ENCODE measurements at regions of chr11 and their contacts with region 1.

Region 1: GRCh38 chr11:77994412-77995362 is at the start of gene INTS4:
- DNase-seq: peak; percentile 99 to 100 (median 99)
- ATAC-seq: peak; percentile 98
- H3K4me3 ChIP-seq: peak within 1 kb of the TSS; percentile 23 to 72
- H3K27ac ChIP-seq: peak within 1 kb of the TSS; percentile 71 to 84 (median 77)
- H3K4me1 ChIP-seq: peaks cover 17% of the 10 kb centered on the region
- H3K27me3 ChIP-seq: no peaks in the 10 kb centered on the region
- CTCF ChIP-seq: peak in 1 of 7 experiments; percentile 11
- POLR2A ChIP-seq: peak in 2 of 3 donors; percentile 50 to 56
- total RNA-seq, gene INTS4: 22.7 to 30.9 TPM

Region 2: GRCh38 chr11:78039919-78040671 is 45.4 kb after region 1 on chr11:
- intact Hi-C with region 1: loop called (anchors 5 kb)
- DNase-seq: peak; percentile 63 to 76 (median 70)
- ATAC-seq: peak; percentile 14
- H3K4me3 ChIP-seq: no peak overlapping the region
- H3K27ac ChIP-seq: peak overlapping the region; percentile 32 to 88 (median 75)
- H3K4me1 ChIP-seq: peaks cover 50% of the 10 kb centered on the region
- H3K27me3 ChIP-seq: no peaks in the 10 kb centered on the region
- CTCF ChIP-seq: no peak
- POLR2A ChIP-seq: no peak